Activated CD4-positive, alpha-beta memory T cell treated with anti-CD3 and anti-CD28 coated beads, Interleukin-2, amount 10 ng/mL, durations not matched to agents 7 days and 5 days (primary cell): ENCODE measurements at regions of chr19 and their contacts with region 1.

Region 1: GRCh38 chr19:55258828-55259539 is at the start of gene PPP6R1:
- DNase-seq: peak; percentile 95
- H3K4me3 Mint-ChIP-seq: peak within 1 kb of the TSS; percentile 100
- H3K27ac Mint-ChIP-seq: peak within 1 kb of the TSS; percentile 100
- H3K4me1 Mint-ChIP-seq: peaks cover 29% of the 10 kb centered on the region
- H3K27me3 Mint-ChIP-seq: no peaks in the 10 kb centered on the region
- total RNA-seq, gene PPP6R1: 213 to 229 TPM

Region 2: DNA sequence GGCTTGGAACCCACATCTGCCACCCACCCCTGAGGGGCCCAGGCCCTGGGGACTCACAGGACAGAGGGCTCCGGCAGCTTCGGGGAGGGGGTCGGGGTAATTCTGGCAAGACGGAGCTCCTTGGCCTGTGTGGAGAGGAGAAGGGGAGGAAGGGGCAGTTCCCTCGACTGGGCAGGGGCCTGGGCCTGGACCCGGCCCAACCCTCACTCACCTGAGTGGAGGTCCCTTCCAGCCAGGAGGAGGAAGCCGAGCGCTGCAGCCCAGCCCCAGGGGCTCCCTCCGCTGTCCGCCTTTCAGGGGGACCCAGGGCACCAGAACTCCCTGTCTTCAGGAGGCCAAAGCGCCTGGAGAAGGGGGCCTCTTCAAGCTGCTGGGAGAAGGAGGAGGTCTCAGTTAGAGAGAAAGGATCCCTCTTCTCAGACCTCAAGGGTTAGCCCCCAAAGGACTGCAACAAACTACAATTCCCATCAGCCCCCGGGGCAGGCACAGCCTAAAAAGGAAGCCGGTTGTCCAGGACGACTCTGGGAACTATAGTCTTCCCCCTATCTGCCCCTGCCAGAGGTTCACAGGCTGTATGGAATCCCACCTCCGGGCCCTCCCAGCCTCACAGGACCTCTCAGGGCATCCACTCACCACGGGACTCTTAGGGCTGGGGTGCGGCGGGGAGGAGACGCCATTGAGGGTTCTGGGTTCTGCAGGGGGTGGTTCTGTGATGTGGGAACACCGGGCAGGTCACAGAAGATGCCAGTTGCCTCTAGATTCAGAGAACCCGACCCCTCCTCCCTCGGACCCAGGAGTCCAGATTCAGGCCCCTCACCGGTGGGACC is 163.5 kb before region 1 on chr19:
- CTCF ChIA-PET with region 1: no interaction called
- POLR2A ChIA-PET with region 1: no interaction called
- DNase-seq: no peak
- H3K4me3 Mint-ChIP-seq: no peak overlapping the region
- H3K27ac Mint-ChIP-seq: no peak overlapping the region
- H3K4me1 Mint-ChIP-seq: no peaks in the 10 kb centered on the region
- H3K27me3 Mint-ChIP-seq: no peaks in the 10 kb centered on the region

Region 3: GRCh38 chr19:55270172-55270942 is 11.4 kb after region 1 on chr19:
- CTCF ChIA-PET with region 1: no interaction called
- POLR2A ChIA-PET with region 1: interaction called, 81 read pairs
- DNase-seq: no peak
- H3K4me3 Mint-ChIP-seq: no peak overlapping the region
- H3K27ac Mint-ChIP-seq: no peak overlapping the region
- H3K4me1 Mint-ChIP-seq: peaks cover 7% of the 10 kb centered on the region
- H3K27me3 Mint-ChIP-seq: no peaks in the 10 kb centered on the region

Region 4: DNA sequence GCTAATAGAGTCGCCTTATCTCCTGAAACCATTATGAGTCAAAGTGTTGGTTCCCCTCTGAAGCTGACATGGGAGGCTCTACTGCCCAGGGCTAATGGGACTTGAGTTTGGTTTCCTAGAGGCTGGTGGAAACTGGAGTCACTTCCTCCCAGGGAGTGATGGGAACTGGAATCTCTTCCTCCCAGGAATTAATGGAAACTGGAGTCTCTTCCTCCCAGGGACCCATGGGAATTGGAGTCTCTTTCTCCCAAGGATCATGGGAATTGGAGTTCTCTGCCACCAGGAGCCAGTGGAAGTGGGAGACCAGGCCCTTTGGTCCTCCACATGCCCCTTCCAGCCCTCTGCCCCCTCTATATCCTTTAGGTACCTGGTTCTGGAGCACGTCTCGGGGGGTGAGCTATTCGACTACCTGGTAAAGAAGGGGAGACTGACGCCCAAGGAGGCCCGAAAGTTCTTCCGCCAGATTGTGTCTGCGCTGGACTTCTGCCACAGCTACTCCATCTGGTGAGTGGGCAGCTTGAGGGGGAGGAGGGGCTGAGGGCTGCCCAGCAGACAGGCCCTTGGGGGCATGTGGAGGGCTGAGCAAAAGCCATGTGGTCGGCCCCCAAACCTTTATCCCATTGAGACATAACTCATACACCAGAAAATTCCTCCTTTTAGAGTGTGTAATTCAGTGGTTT is 30.3 kb after region 1 on chr19:
- CTCF ChIA-PET with region 1: interaction called, 8 read pairs
- POLR2A ChIA-PET with region 1: interaction called, 12 read pairs
- DNase-seq: no peak
- H3K4me3 Mint-ChIP-seq: no peak overlapping the region
- H3K27ac Mint-ChIP-seq: no peak overlapping the region
- H3K4me1 Mint-ChIP-seq: peaks cover 8% of the 10 kb centered on the region
- H3K27me3 Mint-ChIP-seq: peaks cover 2% of the 10 kb centered on the region

Region 5: DNA sequence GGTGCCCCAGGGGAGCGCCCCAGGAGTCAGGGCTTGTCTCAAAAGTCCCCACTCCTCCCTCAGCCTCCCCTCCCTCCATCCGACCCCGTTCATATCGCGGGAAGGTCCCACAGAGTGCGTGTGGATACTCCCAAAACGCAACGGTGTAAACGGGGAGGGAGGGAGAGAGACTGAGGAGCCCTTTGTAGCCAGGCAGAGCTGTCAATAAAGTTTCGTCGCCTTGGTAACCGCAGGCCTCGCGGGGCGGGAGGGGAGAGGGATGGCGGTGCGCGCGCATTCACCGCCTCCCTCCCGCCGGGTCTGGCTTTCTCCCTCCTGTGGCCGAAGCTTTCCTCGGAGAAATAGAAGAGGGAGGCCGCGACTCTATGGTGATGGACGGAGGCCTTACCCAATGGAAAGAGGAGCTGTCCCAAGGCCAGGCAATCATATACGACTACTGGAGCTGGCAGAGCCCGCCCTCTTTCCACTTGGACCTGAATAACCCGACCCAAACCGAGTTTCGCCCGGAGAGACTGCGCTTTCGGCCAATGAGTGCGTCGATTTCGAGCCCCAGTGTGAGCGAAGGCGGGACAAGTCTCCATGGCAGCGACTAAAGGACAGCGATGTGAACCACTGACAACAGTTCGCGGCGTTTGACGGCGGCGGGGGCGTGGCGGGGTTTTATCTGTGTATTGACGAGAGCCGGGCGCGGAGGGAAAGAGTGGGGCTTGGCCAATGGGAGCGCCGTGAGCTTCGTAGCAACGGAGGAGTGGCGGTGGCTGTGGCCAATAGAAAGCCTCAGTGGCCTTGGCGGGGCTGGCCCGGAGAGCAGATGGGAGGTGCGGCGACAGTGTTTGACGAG is 80.3 kb after region 1 on chr19 and contains the start of gene KMT5C:
- CTCF ChIA-PET with region 1: interaction called, 5 read pairs
- POLR2A ChIA-PET with region 1: interaction called, 24 read pairs
- DNase-seq: peak; percentile 100
- H3K4me3 Mint-ChIP-seq: peak within 1 kb of the TSS; percentile 90
- H3K27ac Mint-ChIP-seq: peak within 1 kb of the TSS; percentile 91
- H3K4me1 Mint-ChIP-seq: peaks cover 19% of the 10 kb centered on the region
- H3K27me3 Mint-ChIP-seq: peaks cover 12% of the 10 kb centered on the region
- total RNA-seq, gene KMT5C: 27.2 to 28.9 TPM

Region 6: GRCh38 chr19:55407800-55408532 is 149.0 kb after region 1 on chr19:
- CTCF ChIA-PET with region 1: interaction called, 3 read pairs
- POLR2A ChIA-PET with region 1: interaction called, 56 read pairs
- DNase-seq: peak; percentile 99
- H3K4me3 Mint-ChIP-seq: peak overlapping the region; percentile 83
- H3K27ac Mint-ChIP-seq: peak overlapping the region; percentile 97
- H3K4me1 Mint-ChIP-seq: peaks cover 45% of the 10 kb centered on the region
- H3K27me3 Mint-ChIP-seq: peaks cover 14% of the 10 kb centered on the region